ENCODE measurements at regions of chr11 and their contacts with region 1.

Region 1: DNA sequence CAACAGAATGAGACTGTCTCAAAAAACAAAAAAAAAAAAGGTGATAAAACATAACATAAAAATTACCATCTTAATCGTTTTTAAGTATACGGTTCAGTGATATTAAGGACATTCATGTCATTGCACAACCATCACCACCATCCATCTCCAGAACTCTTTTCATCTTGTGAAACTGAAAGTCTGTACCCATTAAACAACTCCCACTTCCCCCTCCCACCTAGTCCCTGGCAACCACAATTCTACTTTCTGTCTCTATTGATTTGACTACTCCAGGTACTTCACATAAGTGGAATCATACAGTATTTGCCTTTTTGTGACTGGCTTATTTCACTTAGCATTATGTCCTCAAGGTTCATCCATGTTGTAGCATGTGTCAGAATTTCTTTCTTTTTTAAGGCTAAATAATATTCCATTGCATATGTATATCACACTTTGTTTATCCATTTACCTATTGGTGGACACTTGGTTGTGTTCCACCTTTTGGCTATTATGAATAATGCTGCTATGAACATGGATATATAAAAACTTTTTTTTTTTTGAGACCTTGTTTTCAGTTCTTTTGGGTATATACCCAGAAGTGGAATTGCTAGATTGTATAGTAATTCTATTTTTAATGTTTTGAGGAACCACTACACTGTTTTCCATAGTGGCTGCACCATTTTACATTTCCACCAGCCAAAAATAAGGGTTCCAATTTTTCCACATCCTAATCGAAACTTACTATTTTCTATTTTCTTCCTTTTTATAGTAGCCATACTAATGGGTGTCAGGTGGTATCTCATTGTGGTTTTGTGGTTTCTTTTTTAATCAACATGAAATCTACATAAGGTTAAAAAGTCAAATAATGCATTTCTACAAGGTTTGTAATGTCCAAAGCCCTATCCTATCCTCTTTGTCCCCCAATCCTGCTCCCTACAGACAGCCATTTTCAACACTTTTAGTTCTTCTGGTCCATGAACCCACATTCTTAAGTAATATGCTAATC is 23.4 kb upstream of the PIK3C2A start:
- DNase-seq: peak; percentile 63
- ATAC-seq: peak; percentile 82
- H3K4me3 Mint-ChIP-seq: no peak overlapping the region
- H3K27ac Mint-ChIP-seq: peak overlapping the region; percentile 28
- H3K4me1 Mint-ChIP-seq: peaks cover 14% of the 10 kb centered on the region
- H3K27me3 Mint-ChIP-seq: peaks cover 11% of the 10 kb centered on the region

Region 2: GRCh38 chr11:17276236-17277023 is 45.3 kb after region 1 on chr11 and contains the start of gene NUCB2:
- CTCF ChIA-PET with region 1: interaction called, 11 read pairs
- DNase-seq: peak; percentile 97
- ATAC-seq: peak; percentile 97
- H3K4me3 Mint-ChIP-seq: peak within 1 kb of the TSS; percentile 95
- H3K27ac Mint-ChIP-seq: peak within 1 kb of the TSS; percentile 91
- H3K4me1 Mint-ChIP-seq: peaks cover 44% of the 10 kb centered on the region
- H3K27me3 Mint-ChIP-seq: peaks cover 17% of the 10 kb centered on the region
- total RNA-seq, gene NUCB2: 79.4 to 100.0 TPM

Region 3: GRCh38 chr11:17354601-17354991 is 123.4 kb after region 1 on chr11:
- CTCF ChIA-PET with region 1: interaction called, 10 read pairs
- DNase-seq: peak; percentile 78
- ATAC-seq: no peak
- H3K4me3 Mint-ChIP-seq: no peak overlapping the region
- H3K27ac Mint-ChIP-seq: no peak overlapping the region
- H3K4me1 Mint-ChIP-seq: peaks cover 28% of the 10 kb centered on the region
- H3K27me3 Mint-ChIP-seq: peaks cover 30% of the 10 kb centered on the region

Region 4: GRCh38 chr11:17504330-17505107 is 273.4 kb after region 1 on chr11:
- CTCF ChIA-PET with region 1: interaction called, 12 read pairs
- DNase-seq: peak; percentile 79
- ATAC-seq: peak; percentile 83
- H3K4me3 Mint-ChIP-seq: no peak overlapping the region
- H3K27ac Mint-ChIP-seq: no peak overlapping the region
- H3K4me1 Mint-ChIP-seq: no peaks in the 10 kb centered on the region
- H3K27me3 Mint-ChIP-seq: peaks cover 7% of the 10 kb centered on the region

Region 5: DNA sequence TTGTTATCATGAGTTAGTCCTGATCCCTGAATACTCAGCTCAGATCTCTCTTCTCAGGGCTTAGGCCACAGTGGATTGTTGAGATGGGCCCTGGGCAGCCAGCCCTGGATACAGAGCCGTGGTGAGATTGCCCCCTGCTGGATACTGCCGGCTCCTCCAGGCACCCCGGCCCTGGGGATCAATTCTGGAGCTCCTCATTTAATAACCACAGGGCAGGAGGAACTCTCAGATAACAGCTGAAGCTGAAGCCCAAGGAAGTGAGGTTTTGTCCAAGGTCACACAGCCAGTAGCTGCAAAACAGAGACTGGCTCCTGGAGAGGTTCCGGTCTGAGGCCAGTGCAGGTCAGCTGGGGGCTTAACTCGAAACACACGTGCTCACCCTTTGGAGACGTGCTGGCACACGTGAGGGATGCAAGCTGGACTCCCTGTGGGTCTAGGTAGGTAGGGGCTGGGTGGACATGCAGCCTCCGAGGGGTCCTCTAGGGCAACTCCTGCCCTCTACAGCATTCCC is 297.1 kb after region 1 on chr11:
- CTCF ChIA-PET with region 1: interaction called, 10 read pairs
- DNase-seq: peak; percentile 53
- ATAC-seq: peak; percentile 87
- H3K4me3 Mint-ChIP-seq: no peak overlapping the region
- H3K27ac Mint-ChIP-seq: no peak overlapping the region
- H3K4me1 Mint-ChIP-seq: no peaks in the 10 kb centered on the region
- H3K27me3 Mint-ChIP-seq: peaks cover 13% of the 10 kb centered on the region